ENCODE measurements at regions of chr3 and their contacts with region 1.

Region 1: DNA sequence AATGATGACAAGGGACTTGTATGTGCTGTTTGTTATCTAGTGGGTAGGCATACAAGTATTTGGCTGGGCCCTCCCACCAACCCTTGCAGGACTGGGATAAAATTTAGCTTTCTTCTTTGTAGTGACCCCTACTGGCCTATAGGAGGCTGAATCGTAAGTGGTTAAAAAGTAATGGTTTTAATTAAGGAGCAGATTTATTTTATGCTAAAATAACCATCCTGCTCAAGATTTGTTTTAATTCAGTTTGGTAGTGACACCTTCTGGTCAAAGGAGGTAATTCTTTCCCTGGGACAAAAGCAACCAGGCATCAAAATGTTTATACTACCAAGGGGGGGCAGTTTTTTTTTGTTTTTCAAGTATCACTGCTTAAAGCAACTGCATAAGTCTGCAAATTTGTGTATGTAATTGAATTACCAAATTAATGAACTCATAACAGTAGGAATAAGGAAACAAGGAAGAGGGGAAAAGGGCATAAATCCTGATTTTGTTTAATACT is 70.7 kb downstream of the TOP2B start:
- DNase-seq: peak; percentile 73
- H3K4me3 ChIP-seq: no peak overlapping the region
- CTCF ChIP-seq: peak; percentile 29

Region 2: DNA sequence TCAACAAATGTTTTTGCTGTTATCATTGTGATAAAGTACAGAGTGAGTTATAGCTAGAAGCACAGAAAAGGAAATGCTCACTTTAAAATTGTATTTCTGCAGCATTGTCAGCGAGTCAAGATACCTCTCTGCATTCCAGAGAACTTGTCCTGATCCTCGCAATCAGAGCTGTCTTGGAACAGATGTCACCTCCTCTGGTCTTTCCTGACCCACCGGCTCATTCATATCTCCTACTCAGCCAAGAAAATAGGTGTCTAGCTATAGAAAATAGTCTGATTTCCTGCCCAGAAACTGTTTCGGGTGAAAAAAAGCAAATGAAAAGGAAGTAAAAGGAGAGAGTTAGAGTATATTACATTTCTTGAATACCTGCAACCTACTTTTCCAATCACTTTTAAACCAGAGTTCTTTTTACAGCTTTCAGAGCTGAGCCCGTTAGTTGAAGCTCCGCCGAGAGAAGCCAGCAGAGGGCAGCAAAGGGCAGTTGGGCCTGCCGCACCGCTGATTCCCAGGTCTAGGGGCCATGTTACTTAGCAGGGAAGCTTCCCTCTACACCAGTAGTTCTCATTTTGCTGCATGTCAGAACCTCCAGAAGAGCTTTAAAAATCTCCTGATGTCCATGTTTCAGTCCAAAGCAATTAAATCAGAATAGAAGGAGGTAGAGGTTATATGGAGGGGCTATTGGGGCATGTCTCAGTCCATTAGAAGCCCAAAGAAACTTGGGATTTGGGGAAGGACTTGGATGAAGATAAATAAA is 913.7 kb before region 1 on chr3:
- CTCF ChIA-PET with region 1: interaction called, 26 read pairs
- POLR2A ChIA-PET with region 1: no interaction called
- DNase-seq: no peak
- H3K4me3 ChIP-seq: no peak overlapping the region
- CTCF ChIP-seq: peak; percentile 82

Region 3: DNA sequence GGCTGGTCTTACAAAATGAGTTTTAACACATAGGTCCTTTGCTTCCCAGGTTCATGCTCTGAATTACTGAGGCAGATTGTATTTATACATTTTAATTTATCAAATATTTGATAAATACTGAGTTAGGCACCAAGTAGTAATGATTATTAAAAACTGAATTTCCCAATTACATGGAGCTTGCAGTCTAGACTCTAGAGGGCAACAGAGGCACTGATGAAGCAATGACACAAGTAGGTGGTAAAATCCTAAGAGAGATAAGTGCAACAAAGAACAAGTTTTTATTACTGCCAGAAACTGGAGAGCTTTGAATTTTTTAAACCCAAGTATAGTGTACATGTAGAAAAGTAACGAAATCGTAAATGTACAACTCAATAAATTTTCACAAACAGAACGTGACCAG is 572.2 kb before region 1 on chr3:
- CTCF ChIA-PET with region 1: interaction called, 85 read pairs
- POLR2A ChIA-PET with region 1: no interaction called
- DNase-seq: no peak
- H3K4me3 ChIP-seq: no peak overlapping the region
- CTCF ChIP-seq: peak; percentile 66

Region 4: DNA sequence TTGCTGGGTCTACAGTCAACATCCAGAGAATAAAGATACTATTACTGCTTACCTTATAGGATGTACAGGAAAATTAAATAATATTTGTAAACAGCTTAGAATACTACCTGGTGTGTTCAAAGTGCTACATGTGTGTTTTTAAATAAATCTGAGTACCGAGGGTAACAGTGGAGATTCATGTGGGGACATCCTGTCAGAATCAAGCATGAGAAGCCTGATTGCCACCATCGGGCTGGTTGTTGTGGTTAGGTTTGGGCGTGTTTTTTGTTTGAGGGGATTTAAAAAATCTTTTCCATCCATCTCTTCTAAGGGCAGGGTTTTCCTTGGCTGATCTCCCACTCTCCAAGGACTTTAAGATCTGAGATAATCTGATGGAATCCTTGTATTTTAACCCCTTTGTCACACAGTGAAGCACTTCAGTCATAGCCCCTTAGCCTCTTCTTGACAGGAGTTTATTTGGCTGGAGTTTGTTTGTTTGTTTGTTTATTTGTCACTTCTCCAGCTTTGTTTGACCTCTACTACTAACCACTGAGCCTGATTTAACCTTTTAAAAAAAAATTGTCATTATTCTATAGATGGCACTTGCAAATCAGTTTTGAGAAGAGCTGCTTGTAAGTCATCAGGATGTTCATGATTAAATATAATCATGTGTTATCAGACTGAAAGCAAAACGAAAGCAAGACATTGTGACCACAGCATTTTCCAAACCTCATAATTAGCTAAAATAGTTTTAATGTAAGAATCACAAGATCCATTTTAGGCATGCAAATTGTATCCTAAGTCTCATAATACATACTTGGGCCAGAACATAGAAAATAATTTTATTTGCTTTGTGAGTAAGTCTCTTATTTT is 238.8 kb before region 1 on chr3:
- CTCF ChIA-PET with region 1: interaction called, 12 read pairs
- POLR2A ChIA-PET with region 1: no interaction called
- DNase-seq: no peak
- H3K4me3 ChIP-seq: no peak overlapping the region
- CTCF ChIP-seq: no peak

Region 5: GRCh38 chr3:25455441-25456132 is 138.5 kb before region 1 on chr3:
- CTCF ChIA-PET with region 1: interaction called, 23 read pairs
- POLR2A ChIA-PET with region 1: no interaction called
- DNase-seq: no peak
- H3K4me3 ChIP-seq: peak overlapping the region; percentile 12
- CTCF ChIP-seq: no peak

Region 6: DNA sequence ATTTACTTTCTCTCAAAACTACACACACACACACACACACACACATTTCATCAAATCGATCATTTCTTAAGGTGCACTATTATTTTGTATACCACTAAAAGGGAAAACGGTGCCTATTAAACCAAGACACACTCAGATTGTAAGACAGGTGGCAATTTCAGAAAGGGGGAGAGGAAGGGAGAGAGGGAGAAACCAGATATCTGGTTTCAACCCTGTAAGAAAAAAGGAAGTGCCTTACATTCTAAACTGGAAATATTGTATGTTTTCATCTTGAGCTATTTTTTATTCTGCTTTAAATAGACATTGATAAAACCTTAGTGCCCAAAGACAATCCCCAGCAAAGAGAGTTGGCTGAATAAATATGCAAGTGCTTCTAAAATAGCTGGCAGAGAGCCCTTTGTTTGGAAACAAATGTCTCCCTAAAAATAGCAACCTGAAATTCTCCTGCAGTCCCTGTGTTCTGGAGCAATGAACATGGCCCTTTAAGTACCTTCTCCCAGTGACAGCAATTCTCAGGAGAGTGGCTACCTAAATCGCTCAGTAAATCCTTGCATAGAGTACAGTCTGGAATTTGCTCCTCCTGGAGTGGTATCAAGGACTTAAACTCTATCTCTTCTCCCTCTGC is 80.3 kb before region 1 on chr3:
- CTCF ChIA-PET with region 1: no interaction called
- POLR2A ChIA-PET with region 1: no interaction called
- DNase-seq: no peak
- H3K4me3 ChIP-seq: no peak overlapping the region
- CTCF ChIP-seq: no peak

Region 7: DNA sequence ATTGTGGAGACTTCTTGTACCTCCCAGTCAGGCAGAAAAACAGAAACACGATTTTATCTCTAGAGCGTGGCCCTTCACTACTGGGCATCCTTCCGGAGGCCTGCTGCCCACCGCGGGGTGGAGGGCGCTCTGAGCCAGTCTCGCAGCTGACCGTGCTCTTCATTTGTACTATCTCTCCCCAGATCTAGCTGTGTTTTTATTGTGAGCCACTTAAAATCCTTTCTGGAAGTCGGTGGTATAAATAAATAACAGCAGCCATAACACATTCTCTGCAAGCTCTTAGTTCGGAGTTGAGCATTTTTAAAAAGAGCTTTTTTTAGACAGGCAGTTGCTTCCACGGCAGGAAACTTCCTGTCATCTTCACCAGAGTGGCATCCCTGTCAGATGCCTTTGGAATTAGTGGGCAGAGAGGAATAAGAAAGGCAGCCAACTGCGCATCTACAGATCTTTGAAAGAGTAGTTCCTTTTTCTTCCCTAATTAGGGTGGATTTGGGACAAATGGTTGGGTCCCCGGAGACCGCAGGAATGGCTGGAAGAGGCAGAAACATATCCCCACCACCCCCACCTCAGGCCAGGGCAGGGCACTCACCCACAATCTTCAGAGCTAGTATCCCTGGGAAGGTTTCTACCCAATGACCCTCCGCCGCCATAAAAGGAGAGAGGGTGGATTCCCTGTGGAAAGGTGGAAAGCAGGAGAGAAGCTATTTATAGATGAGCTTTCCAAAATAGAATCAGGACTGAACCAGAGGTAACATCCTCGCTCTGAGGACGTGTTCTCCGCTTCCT is 20.5 kb before region 1 on chr3:
- CTCF ChIA-PET with region 1: interaction called, 41 read pairs
- POLR2A ChIA-PET with region 1: interaction called, 13 read pairs
- DNase-seq: no peak
- H3K4me3 ChIP-seq: peak overlapping the region; percentile 33
- CTCF ChIP-seq: no peak

Measured in AG04449 (cell line).